CD8-positive, alpha-beta T cell (primary cell): ENCODE measurements at regions of chr14 and their contacts with region 1.

Region 1: GRCh38 chr14:67816326-67817002 is at the start of gene ZFYVE26:
- DNase-seq: peak; percentile 73 to 96 (median 88)
- ATAC-seq: peak; percentile 90
- H3K4me3 ChIP-seq: peak within 1 kb of the TSS; percentile 65 to 85
- H3K4me3 Mint-ChIP-seq: peak within 1 kb of the TSS; percentile 97
- H3K27ac ChIP-seq: peak within 1 kb of the TSS; percentile 65 to 73
- H3K27ac Mint-ChIP-seq: peak within 1 kb of the TSS; percentile 97
- H3K4me1 ChIP-seq: peaks cover 28% of the 10 kb centered on the region
- H3K4me1 Mint-ChIP-seq: peaks cover 55% of the 10 kb centered on the region
- H3K27me3 ChIP-seq: no peaks in the 10 kb centered on the region
- H3K27me3 Mint-ChIP-seq: no peaks in the 10 kb centered on the region
- CTCF ChIP-seq: no peak
- total RNA-seq, gene ZFYVE26: 20.4 to 21.4 TPM

Region 2: GRCh38 chr14:67240978-67241414 is 575.5 kb before region 1 on chr14:
- CTCF ChIA-PET with region 1: no interaction called
- POLR2A ChIA-PET with region 1: no interaction called
- intact Hi-C with region 1: loop called in 1 of 2 experiments (anchors 5 kb)
- DNase-seq: peak; percentile 81 to 96 (median 91)
- ATAC-seq: peak; percentile 93
- H3K4me3 ChIP-seq: peak overlapping the region; percentile 65 to 76
- H3K4me3 Mint-ChIP-seq: peak overlapping the region; percentile 91
- H3K27ac ChIP-seq: peak overlapping the region; percentile 62
- H3K27ac Mint-ChIP-seq: peak overlapping the region; percentile 82
- H3K4me1 ChIP-seq: peaks cover 14% of the 10 kb centered on the region
- H3K4me1 Mint-ChIP-seq: peaks cover 29% of the 10 kb centered on the region
- H3K27me3 ChIP-seq: no peaks in the 10 kb centered on the region
- H3K27me3 Mint-ChIP-seq: no peaks in the 10 kb centered on the region
- CTCF ChIP-seq: no peak

Region 3: DNA sequence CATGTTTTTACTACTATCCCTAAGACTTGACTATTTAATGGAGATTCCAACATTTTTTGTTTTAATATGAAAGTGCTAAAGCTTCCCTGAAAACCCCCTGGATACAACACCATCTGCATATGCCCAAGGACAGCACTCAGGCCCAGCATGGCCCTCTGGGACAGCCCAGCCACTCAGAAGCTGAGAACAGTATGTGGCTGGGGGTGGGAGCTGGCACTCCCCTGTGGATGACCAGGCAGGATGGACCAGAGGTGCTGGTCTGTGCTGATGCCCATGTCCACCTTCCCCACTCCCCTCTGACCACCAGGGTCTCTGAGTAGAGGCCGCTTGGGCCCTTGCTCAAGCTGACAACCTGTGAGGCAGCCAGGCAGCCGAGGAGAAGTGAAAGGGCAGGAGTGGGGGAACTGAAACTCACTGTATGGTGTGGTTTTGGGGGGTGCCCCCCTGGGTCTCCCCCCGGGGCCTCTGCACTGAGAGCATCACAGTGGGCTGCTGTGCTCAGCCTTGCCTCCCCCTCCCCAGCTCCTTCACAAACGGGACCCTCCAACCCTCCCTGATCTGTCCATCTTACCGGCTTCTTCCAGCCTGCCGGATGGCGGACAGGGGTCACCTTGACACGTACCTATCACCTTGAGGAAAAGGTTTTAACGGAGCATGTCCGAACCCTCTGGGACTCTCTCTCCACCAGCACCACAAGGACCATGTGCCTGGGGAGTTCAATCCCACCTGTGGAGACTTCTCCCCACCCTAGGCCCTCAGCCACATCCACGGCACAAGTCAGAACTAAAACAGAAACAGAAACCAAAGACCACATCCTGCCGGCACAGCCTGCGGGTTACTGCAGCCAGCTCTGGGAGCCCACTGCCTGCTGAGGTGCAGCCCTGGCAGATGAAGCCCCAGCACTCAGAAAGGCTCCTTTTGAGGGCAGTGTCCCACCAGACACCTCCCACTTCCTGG is 328.2 kb before region 1 on chr14 and contains the start of gene TMEM229B:
- CTCF ChIA-PET with region 1: no interaction called
- POLR2A ChIA-PET with region 1: no interaction called
- intact Hi-C with region 1: loop called in 1 of 2 experiments (anchors 10 kb)
- DNase-seq: peak; percentile 43 to 90 (median 77)
- ATAC-seq: peak; percentile 96
- H3K4me3 ChIP-seq: peak within 1 kb of the TSS; percentile 68 to 84
- H3K4me3 Mint-ChIP-seq: peak within 1 kb of the TSS; percentile 99
- H3K27ac ChIP-seq: peak within 1 kb of the TSS; percentile 92 to 93
- H3K27ac Mint-ChIP-seq: peak within 1 kb of the TSS; percentile 100
- H3K4me1 ChIP-seq: peaks cover 51% of the 10 kb centered on the region
- H3K4me1 Mint-ChIP-seq: peaks cover 79% of the 10 kb centered on the region
- H3K27me3 ChIP-seq: no peaks in the 10 kb centered on the region
- H3K27me3 Mint-ChIP-seq: no peaks in the 10 kb centered on the region
- CTCF ChIP-seq: no peak
- total RNA-seq, gene TMEM229B: 4.5 to 4.8 TPM

Region 4: DNA sequence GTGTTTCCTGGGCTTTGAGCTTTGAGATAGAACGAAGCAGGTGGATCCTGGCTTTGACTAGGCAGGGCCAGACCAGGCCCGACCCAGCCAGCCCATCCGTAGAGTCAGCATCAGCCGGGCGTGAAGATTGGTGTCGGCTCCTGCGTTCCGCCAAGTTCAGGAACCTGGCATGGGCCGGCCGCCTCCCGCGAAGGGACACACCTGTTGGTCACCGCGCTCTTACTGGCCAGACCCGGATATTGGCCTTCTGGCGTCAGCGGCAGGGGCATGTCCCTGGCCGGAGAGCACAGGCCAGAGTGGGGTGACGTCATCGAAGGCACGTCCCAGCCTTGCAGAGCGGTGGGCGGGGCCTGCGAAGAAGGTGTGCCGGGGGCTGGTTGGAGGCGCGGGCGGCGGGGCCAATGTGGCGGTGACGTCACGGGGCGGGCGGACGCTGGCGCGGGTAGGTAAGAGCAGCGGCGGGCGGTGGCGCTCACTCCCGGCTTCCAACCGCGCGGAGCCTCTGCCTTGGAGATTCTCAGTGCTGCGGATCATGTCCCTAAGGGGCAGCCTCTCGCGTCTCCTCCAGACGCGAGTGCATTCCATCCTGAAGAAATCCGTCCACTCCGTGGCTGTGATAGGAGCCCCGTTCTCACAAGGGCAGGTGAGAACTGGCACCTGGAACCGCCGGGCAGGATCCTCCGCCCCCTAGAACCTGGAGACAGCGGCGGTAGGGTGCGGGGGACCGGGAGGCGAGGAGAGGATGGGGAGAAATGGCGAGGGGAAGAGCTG is 196.8 kb before region 1 on chr14 and contains the start of gene ARG2:
- CTCF ChIA-PET with region 1: no interaction called
- POLR2A ChIA-PET with region 1: no interaction called
- intact Hi-C with region 1: loop called (anchors 1 kb)
- DNase-seq: peak; percentile 92 to 99 (median 97)
- ATAC-seq: peak; percentile 89
- H3K4me3 ChIP-seq: peak within 1 kb of the TSS; percentile 73 to 90
- H3K4me3 Mint-ChIP-seq: peak within 1 kb of the TSS; percentile 88
- H3K27ac ChIP-seq: peak within 1 kb of the TSS; percentile 78 to 86
- H3K27ac Mint-ChIP-seq: peak within 1 kb of the TSS; percentile 86
- H3K4me1 ChIP-seq: peaks cover 17% of the 10 kb centered on the region
- H3K4me1 Mint-ChIP-seq: peaks cover 32% of the 10 kb centered on the region
- H3K27me3 ChIP-seq: no peaks in the 10 kb centered on the region
- H3K27me3 Mint-ChIP-seq: peaks cover 2% of the 10 kb centered on the region
- CTCF ChIP-seq: no peak
- total RNA-seq, gene ARG2: 1.5 to 3.7 TPM

Region 5: GRCh38 chr14:67683842-67684241 is 132.6 kb before region 1 on chr14:
- CTCF ChIA-PET with region 1: no interaction called
- POLR2A ChIA-PET with region 1: no interaction called
- intact Hi-C with region 1: no loop called
- DNase-seq: no peak
- ATAC-seq: no peak
- H3K4me3 ChIP-seq: no peak overlapping the region
- H3K4me3 Mint-ChIP-seq: no peak overlapping the region
- H3K27ac ChIP-seq: no peak overlapping the region
- H3K27ac Mint-ChIP-seq: no peak overlapping the region
- H3K4me1 ChIP-seq: no peaks in the 10 kb centered on the region
- H3K4me1 Mint-ChIP-seq: peaks cover 8% of the 10 kb centered on the region
- H3K27me3 ChIP-seq: no peaks in the 10 kb centered on the region
- H3K27me3 Mint-ChIP-seq: no peaks in the 10 kb centered on the region
- CTCF ChIP-seq: no peak

Region 6: GRCh38 chr14:67695394-67695949 is 121.0 kb before region 1 on chr14 and contains the start of gene RDH11:
- CTCF ChIA-PET with region 1: no interaction called
- POLR2A ChIA-PET with region 1: no interaction called
- intact Hi-C with region 1: loop called (anchors 1 to 5 kb)
- DNase-seq: peak; percentile 51 to 93 (median 82)
- ATAC-seq: peak; percentile 95
- H3K4me3 ChIP-seq: peak within 1 kb of the TSS; percentile 78 to 86
- H3K4me3 Mint-ChIP-seq: peak within 1 kb of the TSS; percentile 88
- H3K27ac ChIP-seq: peak within 1 kb of the TSS; percentile 52 to 87
- H3K27ac Mint-ChIP-seq: peak within 1 kb of the TSS; percentile 92
- H3K4me1 ChIP-seq: peaks cover 11% of the 10 kb centered on the region
- H3K4me1 Mint-ChIP-seq: peaks cover 23% of the 10 kb centered on the region
- H3K27me3 ChIP-seq: no peaks in the 10 kb centered on the region
- H3K27me3 Mint-ChIP-seq: no peaks in the 10 kb centered on the region
- CTCF ChIP-seq: no peak
- total RNA-seq, gene RDH11: 13.9 to 14.5 TPM

Region 7: GRCh38 chr14:67800743-67801142 is 15.7 kb before region 1 on chr14:
- CTCF ChIA-PET with region 1: no interaction called
- POLR2A ChIA-PET with region 1: no interaction called
- intact Hi-C with region 1: no loop called
- DNase-seq: no peak
- ATAC-seq: no peak
- H3K4me3 ChIP-seq: no peak overlapping the region
- H3K4me3 Mint-ChIP-seq: no peak overlapping the region
- H3K27ac ChIP-seq: no peak overlapping the region
- H3K27ac Mint-ChIP-seq: no peak overlapping the region
- H3K4me1 ChIP-seq: no peaks in the 10 kb centered on the region
- H3K4me1 Mint-ChIP-seq: no peaks in the 10 kb centered on the region
- H3K27me3 ChIP-seq: no peaks in the 10 kb centered on the region
- H3K27me3 Mint-ChIP-seq: no peaks in the 10 kb centered on the region
- CTCF ChIP-seq: no peak

Region 8: DNA sequence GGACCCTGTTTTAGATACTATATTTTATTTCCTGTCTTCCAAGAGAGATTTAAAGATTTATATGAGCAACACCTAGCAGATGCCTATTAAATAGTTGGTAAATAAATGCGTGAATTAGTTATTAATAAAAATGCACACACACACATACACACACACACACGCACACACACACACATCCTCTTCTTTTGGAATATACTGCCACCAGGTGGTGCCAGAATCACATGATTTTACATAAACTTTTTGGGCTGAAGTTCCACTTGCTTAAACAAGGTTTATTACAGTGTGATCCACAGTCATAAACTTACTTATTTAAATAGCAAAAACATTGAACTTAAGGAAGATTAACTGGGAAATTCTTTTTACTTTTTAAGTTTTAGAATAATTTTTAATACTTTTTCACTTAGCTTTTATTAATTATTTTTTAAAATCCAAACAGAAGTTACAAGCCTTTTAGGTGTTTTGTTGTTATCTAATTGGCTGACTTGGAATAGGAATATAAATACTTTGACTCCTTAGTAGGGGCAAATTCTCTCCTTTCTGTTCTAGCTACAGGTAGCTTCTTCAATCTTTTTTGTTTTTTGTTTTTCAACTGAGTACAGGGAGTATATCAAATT is 20.7 kb after region 1 on chr14:
- CTCF ChIA-PET with region 1: no interaction called
- POLR2A ChIA-PET with region 1: no interaction called
- intact Hi-C with region 1: no loop called
- DNase-seq: peak in 7 of 9 experiments; percentile 41 to 85 (median 60)
- ATAC-seq: peak; percentile 62
- H3K4me3 ChIP-seq: no peak overlapping the region
- H3K4me3 Mint-ChIP-seq: no peak overlapping the region
- H3K27ac ChIP-seq: no peak overlapping the region
- H3K27ac Mint-ChIP-seq: no peak overlapping the region
- H3K4me1 ChIP-seq: no peaks in the 10 kb centered on the region
- H3K4me1 Mint-ChIP-seq: peaks cover 5% of the 10 kb centered on the region
- H3K27me3 ChIP-seq: no peaks in the 10 kb centered on the region
- H3K27me3 Mint-ChIP-seq: no peaks in the 10 kb centered on the region
- CTCF ChIP-seq: peak; percentile 69

Region 9: DNA sequence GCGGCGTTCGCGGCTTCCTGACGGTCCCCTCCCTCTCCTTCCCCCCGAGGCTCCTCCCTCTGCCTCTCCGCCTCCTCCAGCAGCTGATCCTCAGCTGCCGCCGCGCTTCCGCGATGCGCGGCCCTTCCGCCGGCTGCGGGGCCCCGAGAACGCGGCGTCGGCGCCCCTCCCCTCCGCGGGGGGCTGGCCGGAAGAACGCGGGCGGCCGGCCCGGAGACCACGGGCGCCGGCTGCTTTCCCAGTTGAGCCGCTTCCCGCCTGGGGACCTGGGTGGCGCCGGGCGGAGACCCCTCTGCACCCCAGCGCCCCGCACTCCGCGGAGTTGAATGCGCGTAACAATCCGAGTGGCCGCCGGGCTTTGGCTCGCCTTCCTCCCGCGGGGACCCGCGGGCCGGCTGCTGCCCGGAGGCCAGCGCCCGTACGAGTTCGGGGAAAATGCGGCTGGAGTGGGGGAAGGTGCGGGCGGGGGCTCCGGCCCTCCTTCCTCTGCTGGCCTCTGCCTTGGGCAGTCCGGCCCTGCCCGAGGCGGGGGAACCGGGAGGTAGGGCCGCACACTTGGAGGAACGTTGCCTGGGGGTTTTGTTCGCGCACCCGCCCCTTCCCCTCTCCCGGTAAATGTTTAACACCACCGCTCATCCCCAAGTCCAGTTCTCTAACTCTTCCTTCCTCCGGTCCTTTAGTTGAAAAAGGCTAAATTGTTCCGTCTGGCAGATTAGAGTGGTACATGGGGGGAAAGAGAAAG is 1336.8 kb after region 1 on chr14:
- CTCF ChIA-PET with region 1: no interaction called
- POLR2A ChIA-PET with region 1: no interaction called
- intact Hi-C with region 1: loop called (anchors 5 kb)
- DNase-seq: peak; percentile 87 to 98 (median 93)
- ATAC-seq: peak; percentile 91
- H3K4me3 ChIP-seq: peak overlapping the region; percentile 93 to 95
- H3K4me3 Mint-ChIP-seq: peak overlapping the region; percentile 89
- H3K27ac ChIP-seq: peak overlapping the region; percentile 51 to 69
- H3K27ac Mint-ChIP-seq: peak overlapping the region; percentile 95
- H3K4me1 ChIP-seq: peaks cover 36% of the 10 kb centered on the region
- H3K4me1 Mint-ChIP-seq: peaks cover 33% of the 10 kb centered on the region
- H3K27me3 ChIP-seq: no peaks in the 10 kb centered on the region
- H3K27me3 Mint-ChIP-seq: no peaks in the 10 kb centered on the region
- CTCF ChIP-seq: no peak